Activated CD4-positive, alpha-beta T cell treated with anti-CD3 and anti-CD28 coated beads, Interleukin-2, amount 10 ng/mL, durations not matched to agents 24 days and 14 days (primary cell): ENCODE measurements at regions of chr1 and their contacts with region 1.

Region 1: GRCh38 chr1:41751804-41752513 is 166.8 kb downstream of the HIVEP3 start:
- DNase-seq: peak; percentile 64
- H3K4me3 Mint-ChIP-seq: peak overlapping the region; percentile 75
- H3K27ac Mint-ChIP-seq: peak overlapping the region; percentile 88
- H3K4me1 Mint-ChIP-seq: peaks cover 73% of the 10 kb centered on the region
- H3K27me3 Mint-ChIP-seq: peaks cover 1% of the 10 kb centered on the region

Region 2: DNA sequence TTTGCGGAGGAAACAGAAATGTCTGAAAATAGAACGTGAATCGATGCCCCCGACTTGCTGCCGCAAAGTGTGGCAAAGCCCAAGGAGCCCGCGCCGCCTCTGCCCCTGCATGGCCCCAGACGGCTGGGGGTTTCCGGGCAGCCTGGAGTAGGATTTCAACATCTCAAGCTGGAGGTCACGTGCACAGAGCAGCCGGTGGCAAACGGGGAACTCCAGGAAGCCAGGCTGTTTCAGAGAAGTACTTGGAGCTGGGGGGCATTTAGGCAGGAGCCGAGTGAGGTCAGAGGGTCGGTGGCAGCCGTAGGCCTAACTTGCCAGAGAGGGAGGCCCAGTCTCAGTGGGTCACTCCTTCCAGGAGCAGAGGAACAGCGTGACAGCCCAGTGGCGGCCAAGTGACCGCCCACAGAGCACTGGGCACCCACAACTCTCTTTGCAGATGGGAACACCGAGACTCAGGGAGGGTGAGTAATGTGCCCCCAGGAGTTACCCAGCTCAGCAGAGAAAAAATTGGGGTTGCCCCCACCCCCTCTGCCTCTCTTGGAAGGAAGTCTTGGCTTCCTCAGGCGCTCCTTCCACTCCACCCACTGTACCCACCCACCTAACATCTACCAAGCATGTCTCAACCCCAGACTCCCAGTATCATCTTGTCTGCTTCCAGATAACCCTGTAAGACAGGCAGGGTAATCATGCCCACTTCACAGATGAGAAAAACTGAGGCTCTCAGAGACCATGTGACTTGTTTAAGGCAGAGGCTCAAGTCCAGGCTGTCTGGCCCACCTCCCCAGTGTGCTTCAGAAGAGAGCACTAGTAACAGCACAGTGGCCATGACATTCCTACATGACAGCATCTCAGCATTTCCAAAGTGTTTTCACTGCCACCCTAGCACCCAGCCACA is 12.7 kb before region 1 on chr1:
- intact Hi-C with region 1: loop called (anchors 1 kb)
- DNase-seq: peak; percentile 92
- H3K4me3 Mint-ChIP-seq: peak overlapping the region; percentile 61
- H3K27ac Mint-ChIP-seq: peak overlapping the region; percentile 94
- H3K4me1 Mint-ChIP-seq: peaks cover 87% of the 10 kb centered on the region
- H3K27me3 Mint-ChIP-seq: no peaks in the 10 kb centered on the region

Region 3: GRCh38 chr1:41783189-41783639 is 31.3 kb after region 1 on chr1:
- intact Hi-C with region 1: loop called (anchors 2 kb)
- DNase-seq: no peak
- H3K4me3 Mint-ChIP-seq: peak overlapping the region; percentile 27
- H3K27ac Mint-ChIP-seq: peak overlapping the region; percentile 79
- H3K4me1 Mint-ChIP-seq: peaks cover 27% of the 10 kb centered on the region
- H3K27me3 Mint-ChIP-seq: no peaks in the 10 kb centered on the region

Region 4: DNA sequence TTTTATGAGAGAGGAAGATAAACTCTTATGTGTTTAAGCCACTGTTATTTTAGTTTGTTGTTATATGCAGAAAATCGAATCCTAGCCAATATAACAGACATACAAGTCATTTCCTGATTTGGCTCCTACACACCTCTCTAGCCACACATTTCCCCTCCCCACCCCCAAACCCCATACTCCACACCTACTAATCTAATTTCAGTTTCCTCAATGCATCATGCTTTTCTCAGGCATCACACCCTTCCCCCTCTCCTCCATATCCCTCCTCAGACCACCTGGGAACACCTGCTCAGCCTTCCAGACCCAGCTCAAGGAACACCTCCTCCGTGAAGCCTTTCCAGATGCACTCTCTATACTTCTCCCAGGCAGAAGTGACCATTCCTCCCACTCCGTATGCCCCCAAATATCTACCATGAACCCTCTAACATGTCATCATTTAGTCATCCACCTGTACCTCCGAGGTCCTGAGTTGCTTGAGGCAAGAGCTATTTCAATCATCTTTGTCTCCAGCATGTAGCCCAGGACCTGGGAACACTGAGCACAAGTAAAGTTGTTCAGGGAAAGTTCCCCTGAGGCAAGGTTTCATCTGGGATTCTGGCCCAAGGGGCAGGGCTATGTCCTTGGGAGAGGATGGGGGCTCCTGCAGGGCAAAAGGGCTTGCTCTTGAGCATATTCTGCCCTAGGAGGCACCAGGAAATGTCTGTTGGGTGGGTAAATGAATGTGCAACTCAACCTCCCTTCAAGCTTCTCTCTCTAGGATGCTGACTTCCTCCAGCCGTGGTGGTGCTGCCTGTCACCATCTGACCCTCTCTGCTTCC is 39.9 kb after region 1 on chr1:
- intact Hi-C with region 1: loop called (anchors 2 kb)
- DNase-seq: peak; percentile 74
- H3K4me3 Mint-ChIP-seq: peak overlapping the region; percentile 64
- H3K27ac Mint-ChIP-seq: peak overlapping the region; percentile 75
- H3K4me1 Mint-ChIP-seq: peaks cover 51% of the 10 kb centered on the region
- H3K27me3 Mint-ChIP-seq: no peaks in the 10 kb centered on the region

Region 5: GRCh38 chr1:41806472-41807155 is 54.7 kb after region 1 on chr1:
- intact Hi-C with region 1: loop called (anchors 2 kb)
- DNase-seq: peak; percentile 86
- H3K4me3 Mint-ChIP-seq: peak overlapping the region; percentile 76
- H3K27ac Mint-ChIP-seq: peak overlapping the region; percentile 91
- H3K4me1 Mint-ChIP-seq: peaks cover 86% of the 10 kb centered on the region
- H3K27me3 Mint-ChIP-seq: no peaks in the 10 kb centered on the region

Region 6: DNA sequence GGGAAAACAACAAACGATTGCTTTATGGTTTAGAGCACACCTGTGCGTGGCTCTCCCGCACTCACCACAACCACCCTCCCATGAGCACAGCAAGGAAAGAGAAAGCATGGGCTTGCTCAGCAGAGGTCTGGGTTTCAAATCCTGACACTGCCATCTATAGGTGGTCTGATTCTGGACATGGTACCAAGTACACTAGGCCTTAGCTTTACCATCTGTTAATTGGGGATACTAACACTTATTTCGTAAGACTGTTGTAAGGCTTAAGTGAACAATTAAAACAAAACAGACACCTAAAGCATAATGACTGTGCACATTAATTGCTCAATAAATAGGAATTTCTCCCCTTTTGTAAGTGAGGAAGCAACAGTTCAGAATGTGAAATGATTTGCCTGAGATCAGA is 116.6 kb after region 1 on chr1:
- intact Hi-C with region 1: loop called (anchors 2 kb)
- DNase-seq: peak; percentile 84
- H3K4me3 Mint-ChIP-seq: peak overlapping the region; percentile 35
- H3K27ac Mint-ChIP-seq: peak overlapping the region; percentile 81
- H3K4me1 Mint-ChIP-seq: peaks cover 34% of the 10 kb centered on the region
- H3K27me3 Mint-ChIP-seq: no peaks in the 10 kb centered on the region

Region 7: DNA sequence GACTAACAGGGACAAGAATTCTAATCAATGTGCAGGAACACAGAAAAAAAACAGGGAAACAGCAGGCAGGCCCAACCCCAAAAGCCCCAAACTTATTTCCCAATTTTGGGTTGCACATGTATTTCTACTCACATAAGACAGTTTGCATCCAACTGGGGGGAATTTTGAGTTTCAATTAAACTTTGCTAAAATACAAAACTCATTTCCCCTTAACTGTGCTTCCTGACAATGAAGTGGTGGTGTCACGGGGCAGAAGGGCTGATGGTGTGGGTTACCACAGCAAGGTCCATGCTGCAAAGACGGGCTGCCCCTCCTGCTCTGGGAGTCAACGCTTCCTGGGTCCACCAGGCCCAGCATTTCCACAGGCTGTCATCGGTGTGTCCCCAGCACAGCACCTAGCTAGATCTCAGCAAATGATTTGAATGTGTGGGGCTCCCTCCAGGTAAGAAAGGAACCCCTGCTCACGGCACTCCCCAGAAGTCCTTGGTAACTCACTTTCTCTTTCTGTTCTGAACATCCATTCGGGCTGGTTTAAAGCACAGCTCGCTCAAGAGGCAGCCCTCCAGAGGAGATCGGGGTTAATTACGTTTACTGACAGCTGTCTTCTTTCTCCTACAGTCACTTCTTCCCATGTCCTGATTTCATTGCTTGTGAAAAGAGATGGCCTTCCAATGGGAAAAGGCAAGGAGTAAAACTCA is 139.4 kb after region 1 on chr1:
- intact Hi-C with region 1: loop called (anchors 5 kb)
- DNase-seq: peak; percentile 91
- H3K4me3 Mint-ChIP-seq: peak overlapping the region; percentile 84
- H3K27ac Mint-ChIP-seq: peak overlapping the region; percentile 94
- H3K4me1 Mint-ChIP-seq: peaks cover 60% of the 10 kb centered on the region
- H3K27me3 Mint-ChIP-seq: no peaks in the 10 kb centered on the region